AG04449 (cell line): ENCODE measurements at regions of chr5 and their contacts with region 1.

Region 1: DNA sequence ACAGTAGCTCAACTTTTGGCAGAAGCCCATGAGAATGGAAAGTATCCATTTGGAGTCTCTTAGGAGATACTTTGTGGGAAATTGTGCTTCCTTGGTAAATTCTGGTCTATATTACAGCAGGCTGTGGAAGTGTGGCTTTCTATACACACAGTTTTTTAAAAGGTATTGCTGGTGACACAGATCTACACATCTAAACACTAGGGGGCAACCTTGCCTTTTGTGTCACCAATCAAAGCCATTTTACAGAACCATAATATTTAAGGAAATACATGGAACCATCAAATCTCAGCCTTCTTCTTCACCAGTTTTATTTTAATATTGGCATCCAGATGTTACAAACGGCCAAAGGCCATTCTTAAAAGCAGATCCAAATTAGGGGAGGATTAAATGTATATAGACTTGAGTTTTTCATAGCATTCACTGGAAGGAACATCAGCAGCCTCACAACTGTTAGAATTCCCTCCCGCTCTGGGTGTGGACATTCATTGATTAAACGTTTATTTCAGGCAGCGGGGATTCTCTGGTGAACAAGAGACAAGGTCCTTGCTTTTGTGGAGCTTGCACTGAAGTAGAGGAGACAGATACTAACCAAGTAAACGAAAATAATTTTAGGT is 132.4 kb upstream of the EPB41L4A start:
- DNase-seq: peak; percentile 10
- H3K4me3 ChIP-seq: no peak overlapping the region
- CTCF ChIP-seq: peak; percentile 67

Region 2: GRCh38 chr5:112533362-112533761 is 18.2 kb before region 1 on chr5:
- CTCF ChIA-PET with region 1: interaction called, 10 read pairs
- POLR2A ChIA-PET with region 1: no interaction called
- DNase-seq: no peak
- H3K4me3 ChIP-seq: no peak overlapping the region
- CTCF ChIP-seq: no peak

Region 3: DNA sequence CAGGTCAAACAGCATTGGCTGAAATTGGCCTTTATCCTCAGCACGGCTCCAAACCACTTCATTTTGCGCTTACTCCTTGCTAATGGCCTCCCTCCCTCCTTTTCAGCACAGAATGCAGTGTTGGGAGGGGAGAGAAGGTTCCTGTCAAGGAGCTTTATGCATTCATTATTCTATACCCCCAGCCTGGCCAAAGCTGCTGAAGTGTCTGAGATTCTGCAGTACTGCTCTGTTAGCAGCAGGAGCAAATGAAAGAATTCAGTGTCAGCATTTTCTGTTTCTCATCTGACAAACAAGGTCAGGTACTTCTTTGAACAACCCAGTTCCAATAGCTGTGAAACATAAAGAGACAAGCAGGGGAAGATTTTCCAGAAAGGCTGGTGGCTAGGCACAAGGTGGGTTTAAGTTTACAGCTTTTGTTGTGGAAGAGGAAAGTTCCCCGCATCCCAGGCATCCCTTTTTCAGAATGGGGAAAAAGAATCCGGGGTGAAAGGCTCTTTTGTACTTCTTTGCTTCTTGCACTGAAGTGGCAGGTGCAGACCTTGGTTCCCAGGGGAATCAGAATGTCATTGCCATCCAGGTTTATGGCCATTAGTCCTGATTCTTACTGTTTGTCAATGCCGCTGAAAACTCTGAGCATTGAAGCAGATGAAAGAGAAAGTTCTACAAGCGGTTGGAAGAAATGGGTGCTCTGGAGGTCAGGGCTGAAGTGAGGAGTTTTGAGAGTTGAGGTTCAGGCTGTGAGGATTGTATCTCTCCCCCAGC is 76.9 kb after region 1 on chr5:
- CTCF ChIA-PET with region 1: no interaction called
- POLR2A ChIA-PET with region 1: no interaction called
- DNase-seq: no peak
- H3K4me3 ChIP-seq: no peak overlapping the region
- CTCF ChIP-seq: no peak

Region 4: GRCh38 chr5:112737463-112738190 is 186.1 kb after region 1 on chr5 and contains the start of gene APC:
- CTCF ChIA-PET with region 1: interaction called, 10 read pairs
- POLR2A ChIA-PET with region 1: no interaction called
- DNase-seq: peak; percentile 17
- H3K4me3 ChIP-seq: peak within 1 kb of the TSS; percentile 84
- CTCF ChIP-seq: no peak

Region 5: GRCh38 chr5:112772124-112772523 is 220.6 kb after region 1 on chr5:
- CTCF ChIA-PET with region 1: interaction called, 13 read pairs
- POLR2A ChIA-PET with region 1: no interaction called
- DNase-seq: no peak
- H3K4me3 ChIP-seq: no peak overlapping the region
- CTCF ChIP-seq: no peak

Region 6: DNA sequence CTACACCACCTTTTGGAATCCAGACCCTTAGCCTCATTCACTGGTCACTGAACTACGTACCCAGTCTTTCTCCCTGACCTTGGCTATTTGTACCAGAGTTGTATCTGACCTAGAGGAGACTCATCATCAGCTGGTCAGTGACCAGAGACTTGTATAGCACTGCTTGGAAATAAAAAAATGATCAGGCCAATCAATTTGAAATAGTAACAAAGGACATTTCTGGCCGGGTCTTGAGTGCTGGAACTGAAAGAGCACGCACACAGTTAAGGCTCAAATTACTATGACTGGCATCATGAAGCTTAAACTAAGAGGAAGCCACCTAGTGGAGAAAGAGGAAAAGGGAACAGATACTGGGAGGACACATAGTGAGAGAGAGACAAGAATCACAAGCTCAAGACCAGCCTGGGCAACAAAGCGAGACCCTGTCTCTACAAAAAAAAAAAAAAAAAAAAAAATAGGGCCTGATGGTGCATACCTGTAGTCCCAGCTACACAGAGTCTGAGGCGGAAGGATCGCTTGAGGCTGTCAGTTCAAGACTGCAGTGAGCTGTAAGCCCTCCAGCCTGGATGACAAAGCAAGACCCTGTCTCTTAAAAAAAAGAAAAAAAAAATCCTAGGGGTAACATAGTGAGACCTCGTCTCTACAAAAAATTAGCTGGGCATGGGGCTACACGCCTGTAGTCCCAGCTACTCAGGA is 296.7 kb after region 1 on chr5:
- CTCF ChIA-PET with region 1: interaction called, 40 read pairs
- POLR2A ChIA-PET with region 1: no interaction called
- DNase-seq: peak; percentile 26
- H3K4me3 ChIP-seq: peak overlapping the region; percentile 18
- CTCF ChIP-seq: peak; percentile 65